Uterus (tissue), 4 donors: ENCODE measurements at regions of chr13 and their contacts with region 1.

Region 1: GRCh38 chr13:102845630-102846260 is at the start of gene ERCC5:
- DNase-seq: peak; percentile 92 to 93
- H3K4me3 ChIP-seq: peak within 1 kb of the TSS; percentile 70 to 79
- H3K27ac ChIP-seq: peak within 1 kb of the TSS; percentile 95 to 97
- H3K4me1 ChIP-seq: no peaks in the 10 kb centered on the region
- H3K27me3 ChIP-seq: no peaks in the 10 kb centered on the region
- CTCF ChIP-seq: peak in 2 of 4 experiments; percentile 6 to 32
- POLR2A ChIP-seq: peak; percentile 50 to 81
- total RNA-seq, gene ERCC5: 43.7 to 134 (median 76.4) TPM

Region 2: GRCh38 chr13:102596147-102597028 is 249.4 kb before region 1 on chr13 and contains the start of gene TPP2:
- intact Hi-C with region 1: loop called (anchors 10 kb)
- DNase-seq: peak; percentile 99 to 100
- H3K4me3 ChIP-seq: peak within 1 kb of the TSS; percentile 96 to 100
- H3K27ac ChIP-seq: peak within 1 kb of the TSS; percentile 92 to 100
- H3K4me1 ChIP-seq: no peaks in the 10 kb centered on the region
- H3K27me3 ChIP-seq: no peaks in the 10 kb centered on the region
- CTCF ChIP-seq: peak in 1 of 4 experiments; percentile 6
- POLR2A ChIP-seq: peak; percentile 73 to 82
- total RNA-seq, gene TPP2: 42.1 to 83.5 (median 48.7) TPM